Naive thymus-derived CD4-positive, alpha-beta T cell (primary cell): ENCODE measurements at regions of chr2 and their contacts with region 1.

Region 1: DNA sequence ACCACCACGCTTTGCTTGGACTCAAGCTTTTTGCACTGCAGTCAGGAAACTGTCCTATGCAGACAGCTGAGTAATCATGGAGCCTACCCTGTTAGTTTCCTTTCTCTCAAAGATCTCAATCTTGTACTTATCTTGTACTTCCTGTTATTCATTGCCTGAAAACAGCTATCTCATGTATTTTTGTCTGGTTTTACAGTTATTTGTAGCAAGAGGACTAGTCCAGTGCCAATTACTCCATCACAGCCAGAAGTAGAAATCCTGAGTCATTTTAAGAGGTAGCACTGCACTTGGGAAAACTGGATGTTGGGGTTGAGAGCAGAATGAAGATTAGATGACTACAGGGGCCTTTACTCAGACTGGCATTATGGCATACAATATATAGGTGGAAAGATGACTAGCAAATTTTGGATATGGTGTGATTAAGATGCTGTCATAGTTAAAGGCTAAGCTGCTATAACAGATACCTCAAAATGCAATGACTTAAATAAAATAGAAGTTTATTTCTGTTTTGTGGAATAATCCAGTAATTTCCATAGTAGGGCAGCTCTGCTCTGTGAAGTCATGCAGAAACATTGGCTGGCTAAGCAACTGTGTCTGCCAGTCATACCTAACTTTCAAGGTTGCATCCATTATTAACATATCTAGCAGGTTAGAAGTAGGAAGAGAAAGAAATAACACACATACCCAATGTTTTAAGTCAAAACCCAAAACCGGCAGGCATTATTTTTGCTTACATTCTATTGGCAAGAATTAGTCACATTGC is 21.1 kb upstream of the CHMP3 start:
- DNase-seq: peak in 7 of 9 donors; percentile 6 to 46 (median 29)
- ATAC-seq: peak; percentile 88
- H3K4me3 ChIP-seq: peak overlapping the region; percentile 21
- H3K4me3 Mint-ChIP-seq: peak overlapping the region in 9 of 10 donors; percentile 37 to 68 (median 47)
- H3K27ac ChIP-seq: peak overlapping the region; percentile 59
- H3K27ac Mint-ChIP-seq: peak overlapping the region; percentile 13 to 94 (median 88)
- H3K4me1 ChIP-seq: peaks cover 10 to 17% of the 10 kb centered on the region in 2 donors
- H3K4me1 Mint-ChIP-seq: peaks cover 5 to 27% (median 20%) of the 10 kb centered on the region in 7 donors
- H3K27me3 ChIP-seq: no peaks in the 10 kb centered on the region
- H3K27me3 Mint-ChIP-seq: peaks cover 0 to 2% (median 0%) of the 10 kb centered on the region in 5 donors

Region 2: DNA sequence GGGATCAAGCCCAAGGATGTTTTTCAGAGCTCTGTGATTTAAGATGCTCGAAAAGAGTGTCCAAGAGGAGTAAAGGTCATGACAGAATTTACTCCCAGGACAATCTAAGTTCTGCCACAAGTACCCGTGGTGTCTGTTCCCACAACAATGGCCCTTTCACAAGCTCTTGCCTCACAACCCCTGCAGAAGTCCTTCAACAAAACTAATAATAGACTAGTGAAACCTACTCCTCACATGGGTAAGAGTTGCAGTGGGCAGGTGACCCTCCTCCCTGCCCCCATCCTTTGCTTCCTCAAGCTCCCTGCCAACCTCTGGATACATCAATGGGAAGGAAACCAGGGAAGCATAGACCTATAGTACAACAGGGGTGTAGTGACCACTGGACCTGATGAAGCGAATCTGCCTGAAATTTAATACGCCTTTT is 443.4 kb before region 1 on chr2:
- CTCF ChIA-PET with region 1: no interaction called
- POLR2A ChIA-PET with region 1: no interaction called
- intact Hi-C with region 1: no loop called
- DNase-seq: no peak
- ATAC-seq: no peak
- H3K4me3 ChIP-seq: no peak overlapping the region
- H3K4me3 Mint-ChIP-seq: no peak overlapping the region
- H3K27ac ChIP-seq: no peak overlapping the region
- H3K27ac Mint-ChIP-seq: peak overlapping the region in 8 of 9 donors; percentile 14 to 73 (median 40)
- H3K4me1 ChIP-seq: no peaks in the 10 kb centered on the region
- H3K4me1 Mint-ChIP-seq: peaks cover 0 to 11% (median 4%) of the 10 kb centered on the region in 7 donors
- H3K27me3 ChIP-seq: no peaks in the 10 kb centered on the region
- H3K27me3 Mint-ChIP-seq: no peaks in the 10 kb centered on the region

Region 3: DNA sequence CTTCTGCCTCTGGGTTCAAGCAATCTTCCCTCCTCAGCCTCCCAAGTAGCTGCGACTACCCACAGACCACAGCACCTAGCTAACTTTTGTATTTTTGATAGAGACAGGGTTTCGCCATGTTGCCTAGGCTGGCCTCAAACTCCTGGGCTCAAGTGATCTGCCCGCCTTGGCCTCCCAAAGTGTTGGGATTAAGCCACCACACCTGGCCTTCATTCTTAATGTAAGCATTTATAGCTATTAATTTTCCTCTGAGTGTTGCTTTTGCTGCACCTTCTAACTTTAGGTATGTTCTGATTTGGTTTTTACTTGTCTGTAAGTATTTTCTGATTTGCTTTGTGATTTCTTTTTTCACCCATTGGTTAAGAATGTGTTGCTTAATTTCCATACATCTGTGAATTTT is 50.7 kb before region 1 on chr2:
- CTCF ChIA-PET with region 1: no interaction called
- POLR2A ChIA-PET with region 1: no interaction called
- intact Hi-C with region 1: loop called in 1 of 2 experiments (anchors 10 kb)
- DNase-seq: no peak
- ATAC-seq: no peak
- H3K4me3 ChIP-seq: no peak overlapping the region
- H3K4me3 Mint-ChIP-seq: peak overlapping the region in 2 of 10 donors; percentile 47 to 51
- H3K27ac ChIP-seq: no peak overlapping the region
- H3K27ac Mint-ChIP-seq: peak overlapping the region in 5 of 9 donors; percentile 48 to 84 (median 57)
- H3K4me1 ChIP-seq: peaks cover 0 to 20% of the 10 kb centered on the region in 2 donors
- H3K4me1 Mint-ChIP-seq: peaks cover 7 to 60% (median 52%) of the 10 kb centered on the region in 7 donors
- H3K27me3 ChIP-seq: no peaks in the 10 kb centered on the region
- H3K27me3 Mint-ChIP-seq: no peaks in the 10 kb centered on the region

Region 4: DNA sequence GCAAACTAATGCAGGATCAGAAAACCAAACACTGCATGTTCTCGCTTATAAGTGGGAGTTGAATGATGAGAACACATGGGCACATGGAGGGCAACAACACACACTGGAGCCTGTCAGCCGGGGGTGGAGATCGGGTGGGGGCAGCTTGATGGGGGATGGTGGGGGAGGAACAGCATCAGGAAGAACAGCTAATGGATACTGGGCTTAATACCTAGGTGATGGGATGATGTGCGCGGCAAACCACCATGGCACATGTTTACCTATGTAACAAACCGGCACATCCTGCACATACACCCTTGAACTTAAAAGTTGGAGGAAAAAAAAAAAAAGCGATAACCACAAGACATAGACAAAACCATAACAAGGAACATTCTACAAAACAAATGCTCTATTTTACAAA is 31.4 kb before region 1 on chr2:
- CTCF ChIA-PET with region 1: no interaction called
- POLR2A ChIA-PET with region 1: interaction called, 4 read pairs
- intact Hi-C with region 1: loop called in 1 of 2 experiments (anchors 5 kb)
- DNase-seq: peak in 7 of 9 donors; percentile 42 to 75 (median 68)
- ATAC-seq: peak; percentile 87
- H3K4me3 ChIP-seq: peak overlapping the region; percentile 22
- H3K4me3 Mint-ChIP-seq: peak overlapping the region; percentile 61 to 90 (median 83)
- H3K27ac ChIP-seq: peak overlapping the region; percentile 8
- H3K27ac Mint-ChIP-seq: peak overlapping the region in 7 of 9 donors; percentile 71 to 98 (median 93)
- H3K4me1 ChIP-seq: peaks cover 13 to 30% of the 10 kb centered on the region in 2 donors
- H3K4me1 Mint-ChIP-seq: peaks cover 1 to 42% (median 19%) of the 10 kb centered on the region in 7 donors
- H3K27me3 ChIP-seq: no peaks in the 10 kb centered on the region
- H3K27me3 Mint-ChIP-seq: no peaks in the 10 kb centered on the region

Region 5: GRCh38 chr2:86617153-86617552 is 32.8 kb after region 1 on chr2:
- CTCF ChIA-PET with region 1: no interaction called
- POLR2A ChIA-PET with region 1: interaction called, 12 read pairs
- intact Hi-C with region 1: loop called in 1 of 2 experiments (anchors 2 kb)
- DNase-seq: no peak
- ATAC-seq: no peak
- H3K4me3 ChIP-seq: no peak overlapping the region
- H3K4me3 Mint-ChIP-seq: no peak overlapping the region
- H3K27ac ChIP-seq: no peak overlapping the region
- H3K27ac Mint-ChIP-seq: no peak overlapping the region
- H3K4me1 ChIP-seq: peaks cover 8 to 17% of the 10 kb centered on the region in 2 donors
- H3K4me1 Mint-ChIP-seq: peaks cover 28 to 69% (median 59%) of the 10 kb centered on the region in 7 donors
- H3K27me3 ChIP-seq: no peaks in the 10 kb centered on the region
- H3K27me3 Mint-ChIP-seq: no peaks in the 10 kb centered on the region

Region 6: GRCh38 chr2:86790676-86791572 is 206.6 kb after region 1 on chr2 and contains the start of gene CD8A:
- CTCF ChIA-PET with region 1: no interaction called
- POLR2A ChIA-PET with region 1: no interaction called
- intact Hi-C with region 1: no loop called
- DNase-seq: peak in 1 of 9 donors; percentile 9
- ATAC-seq: peak; percentile 44
- H3K4me3 ChIP-seq: peak within 1 kb of the TSS; percentile 55
- H3K4me3 Mint-ChIP-seq: peak within 1 kb of the TSS; percentile 81 to 94 (median 88)
- H3K27ac ChIP-seq: no peak within 1 kb of the TSS
- H3K27ac Mint-ChIP-seq: peak within 1 kb of the TSS in 4 of 9 donors; percentile 14 to 77 (median 53)
- H3K4me1 ChIP-seq: peaks cover 16 to 68% of the 10 kb centered on the region in 2 donors
- H3K4me1 Mint-ChIP-seq: peaks cover 17 to 44% (median 30%) of the 10 kb centered on the region in 7 donors
- H3K27me3 ChIP-seq: peaks cover 0 to 24% of the 10 kb centered on the region in 2 donors
- H3K27me3 Mint-ChIP-seq: peaks cover 51 to 68% (median 59%) of the 10 kb centered on the region in 5 donors
- total RNA-seq, gene CD8A: 1.4 to 56.0 (median 2.0) TPM